Esophagus muscularis mucosa (tissue), 4 donors: ENCODE measurements at regions of chr2 and their contacts with region 1.

Region 1: DNA sequence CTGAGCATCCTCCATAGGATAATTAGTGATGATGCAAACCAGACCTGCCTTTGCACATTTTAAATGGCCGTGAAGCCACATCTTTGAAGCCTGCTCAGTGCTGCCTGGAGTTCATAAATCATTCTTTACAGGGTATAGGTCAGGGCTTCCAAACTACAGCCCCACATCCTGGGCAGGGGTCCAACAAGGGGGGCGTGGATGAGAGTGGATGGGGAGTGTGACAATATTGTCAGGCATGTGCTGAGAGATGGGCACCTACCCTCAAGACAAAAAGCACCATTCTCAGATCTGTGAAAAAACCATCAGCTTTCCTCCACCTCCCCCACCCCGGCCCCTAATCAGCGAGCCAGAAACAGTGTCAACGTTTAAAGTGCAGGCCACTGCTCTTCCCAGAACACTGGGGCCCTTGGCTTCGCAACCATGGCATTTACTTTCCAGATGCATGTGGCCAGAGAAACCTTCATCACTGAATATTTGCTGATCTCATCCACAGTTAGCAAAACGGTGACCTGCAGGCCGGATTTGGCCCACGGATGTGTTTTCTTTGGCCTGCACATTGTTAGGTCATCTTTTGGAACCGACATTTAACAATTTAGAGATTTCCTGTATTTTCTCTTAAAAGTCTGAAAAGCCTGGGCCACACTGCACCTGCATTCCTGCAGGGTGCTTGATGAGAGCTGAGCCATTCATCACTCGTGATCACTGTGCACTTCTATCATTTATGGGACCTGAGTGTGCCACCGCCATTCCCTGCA is 130.7 kb downstream of the ANKRD44 start:
- DNase-seq: peak; percentile 91
- H3K4me3 ChIP-seq: no peak overlapping the region
- H3K27ac ChIP-seq: peak overlapping the region; percentile 24 to 66 (median 60)
- H3K4me1 ChIP-seq: peaks cover 3 to 66% (median 52%) of the 10 kb centered on the region in 4 donors
- H3K27me3 ChIP-seq: no peaks in the 10 kb centered on the region
- CTCF ChIP-seq: no peak
- EP300 ChIP-seq: no peak
- POLR2A ChIP-seq: no peak

Region 2: DNA sequence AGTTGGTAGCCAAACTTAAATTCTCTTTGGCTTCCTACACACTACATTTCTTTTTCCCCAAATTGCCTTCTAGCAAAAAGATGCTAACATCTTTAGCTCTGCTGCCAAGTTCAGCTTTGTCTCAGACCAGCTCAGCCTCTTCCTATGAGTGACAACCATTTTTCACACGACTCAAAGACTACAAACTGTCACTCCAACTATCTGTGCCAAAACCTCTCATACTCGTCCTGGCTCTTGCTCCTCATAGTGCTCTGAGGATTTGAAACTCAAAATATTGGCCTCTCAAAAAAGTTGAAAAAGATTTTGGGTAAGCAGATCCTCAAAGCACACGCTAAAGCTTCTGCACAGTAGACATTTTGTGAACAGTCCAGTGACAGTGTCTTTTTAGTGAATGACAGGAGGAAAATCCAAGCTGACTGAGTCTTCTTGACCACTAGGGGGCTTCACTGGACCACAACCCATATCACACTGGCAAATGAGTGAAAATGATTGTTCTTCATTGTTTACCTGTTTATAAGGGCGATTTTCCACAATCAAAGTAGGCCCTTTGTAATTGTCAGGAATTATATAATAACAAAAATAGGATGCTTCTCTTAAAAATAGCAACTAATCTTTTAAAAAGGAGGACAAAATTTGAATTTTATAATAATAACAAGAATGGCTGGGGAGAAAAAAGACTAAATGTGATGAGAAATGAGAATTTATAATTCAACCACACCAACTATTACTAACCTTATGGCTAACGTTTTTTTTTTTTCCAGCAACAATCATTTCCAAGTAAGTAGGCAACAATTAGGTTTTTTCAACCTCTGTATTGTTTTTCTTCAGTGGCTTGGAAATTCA is 167.9 kb before region 1 on chr2:
- intact Hi-C with region 1: loop called (anchors 10 kb)
- DNase-seq: no peak
- H3K4me3 ChIP-seq: no peak overlapping the region
- H3K27ac ChIP-seq: no peak overlapping the region
- H3K4me1 ChIP-seq: no peaks in the 10 kb centered on the region
- H3K27me3 ChIP-seq: no peaks in the 10 kb centered on the region
- CTCF ChIP-seq: peak; percentile 70 to 77 (median 74)
- EP300 ChIP-seq: no peak
- POLR2A ChIP-seq: no peak

Region 3: DNA sequence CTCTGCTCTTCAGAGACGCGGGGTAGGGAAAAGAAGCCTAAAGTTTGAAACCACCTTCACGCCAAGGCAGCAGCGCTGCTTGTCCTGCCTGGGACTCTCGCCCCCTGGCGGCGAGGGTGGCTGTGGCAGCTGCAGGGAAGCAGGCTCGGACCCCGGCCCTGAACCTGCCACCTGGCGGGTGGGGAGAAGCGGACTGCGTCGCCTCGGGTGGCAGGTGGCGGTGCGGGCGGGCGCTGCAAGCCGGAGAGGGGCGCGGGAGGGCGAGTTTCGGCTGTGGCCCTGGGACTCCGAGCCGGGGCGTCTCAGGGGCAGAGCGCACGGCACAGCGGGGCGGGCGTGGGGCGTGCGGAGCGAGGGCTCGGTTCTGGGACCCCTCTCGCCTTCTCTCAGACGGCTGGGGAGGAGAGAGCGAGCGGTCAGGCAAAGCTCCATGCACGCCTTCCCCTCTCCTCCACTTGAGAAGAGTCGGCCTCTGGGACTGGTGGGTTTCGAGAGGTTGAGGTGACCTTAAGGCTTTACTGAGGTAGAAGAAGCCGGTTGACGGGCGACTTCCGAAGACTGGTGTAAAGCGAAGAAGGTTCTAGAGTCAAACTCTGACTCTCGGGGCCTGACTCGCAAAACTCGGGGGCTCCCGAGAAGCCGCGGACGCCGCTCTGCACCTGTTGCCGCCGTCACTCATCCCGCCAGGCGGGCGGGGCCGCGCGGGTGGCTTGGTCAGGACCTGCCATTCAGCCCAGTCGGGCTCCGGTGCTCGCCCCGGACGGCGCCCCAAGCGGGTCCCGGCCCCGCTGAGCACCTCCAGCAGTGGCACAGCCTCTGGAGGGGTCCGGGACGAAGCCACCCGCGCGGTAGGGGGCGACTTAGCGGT is 606.3 kb after region 1 on chr2:
- intact Hi-C with region 1: no loop called
- DNase-seq: no peak
- H3K4me3 ChIP-seq: peak overlapping the region; percentile 48 to 58 (median 53)
- H3K27ac ChIP-seq: no peak overlapping the region
- H3K4me1 ChIP-seq: peaks cover 0 to 14% (median 13%) of the 10 kb centered on the region in 4 donors
- H3K27me3 ChIP-seq: peaks cover 0 to 31% (median 15%) of the 10 kb centered on the region in 4 donors
- CTCF ChIP-seq: peak; percentile 13 to 48 (median 31)
- EP300 ChIP-seq: no peak
- POLR2A ChIP-seq: no peak